ENCODE measurements at regions of chr18 and their contacts with region 1.

Region 1: GRCh38 chr18:35592298-35592697 is 10.8 kb downstream of the GALNT1 start:
- DNase-seq: peak; percentile 52
- ATAC-seq: peak; percentile 96
- H3K4me3 Mint-ChIP-seq: no peak overlapping the region
- H3K27ac Mint-ChIP-seq: no peak overlapping the region
- H3K4me1 Mint-ChIP-seq: peaks cover 49% of the 10 kb centered on the region
- H3K27me3 Mint-ChIP-seq: no peaks in the 10 kb centered on the region
- CTCF ChIP-seq: no peak

Region 2: GRCh38 chr18:34801774-34802173 is 790.5 kb before region 1 on chr18:
- CTCF ChIA-PET with region 1: no interaction called
- POLR2A ChIA-PET with region 1: no interaction called
- intact Hi-C with region 1: no loop called
- DNase-seq: no peak
- ATAC-seq: no peak
- H3K4me3 Mint-ChIP-seq: no peak overlapping the region
- H3K27ac Mint-ChIP-seq: no peak overlapping the region
- H3K4me1 Mint-ChIP-seq: no peaks in the 10 kb centered on the region
- H3K27me3 Mint-ChIP-seq: peaks cover 3% of the 10 kb centered on the region
- CTCF ChIP-seq: no peak

Region 3: GRCh38 chr18:34834897-34835296 is 757.4 kb before region 1 on chr18:
- CTCF ChIA-PET with region 1: no interaction called
- POLR2A ChIA-PET with region 1: no interaction called
- intact Hi-C with region 1: no loop called
- DNase-seq: no peak
- ATAC-seq: no peak
- H3K4me3 Mint-ChIP-seq: no peak overlapping the region
- H3K27ac Mint-ChIP-seq: no peak overlapping the region
- H3K4me1 Mint-ChIP-seq: no peaks in the 10 kb centered on the region
- H3K27me3 Mint-ChIP-seq: peaks cover 9% of the 10 kb centered on the region
- CTCF ChIP-seq: no peak

Region 4: GRCh38 chr18:35580701-35581539 is 11.4 kb before region 1 on chr18:
- CTCF ChIA-PET with region 1: interaction called, 8 read pairs
- POLR2A ChIA-PET with region 1: interaction called, 84 read pairs
- intact Hi-C with region 1: loop called (anchors 1 kb)
- DNase-seq: peak; percentile 73
- ATAC-seq: peak; percentile 71
- H3K4me3 Mint-ChIP-seq: peak overlapping the region; percentile 79
- H3K27ac Mint-ChIP-seq: peak overlapping the region; percentile 83
- H3K4me1 Mint-ChIP-seq: peaks cover 42% of the 10 kb centered on the region
- H3K27me3 Mint-ChIP-seq: no peaks in the 10 kb centered on the region
- CTCF ChIP-seq: no peak

Region 5: GRCh38 chr18:35616664-35617423 is 24.5 kb after region 1 on chr18:
- CTCF ChIA-PET with region 1: interaction called, 6 read pairs
- POLR2A ChIA-PET with region 1: interaction called, 15 read pairs
- intact Hi-C with region 1: loop called (anchors 1 kb)
- DNase-seq: peak; percentile 24
- ATAC-seq: peak; percentile 93
- H3K4me3 Mint-ChIP-seq: no peak overlapping the region
- H3K27ac Mint-ChIP-seq: no peak overlapping the region
- H3K4me1 Mint-ChIP-seq: peaks cover 12% of the 10 kb centered on the region
- H3K27me3 Mint-ChIP-seq: no peaks in the 10 kb centered on the region
- CTCF ChIP-seq: no peak

Region 6: GRCh38 chr18:35756506-35757117 is 164.3 kb after region 1 on chr18:
- CTCF ChIA-PET with region 1: interaction called, 10 read pairs
- POLR2A ChIA-PET with region 1: no interaction called
- intact Hi-C with region 1: loop called (anchors 1 kb)
- DNase-seq: no peak
- ATAC-seq: peak; percentile 75
- H3K4me3 Mint-ChIP-seq: no peak overlapping the region
- H3K27ac Mint-ChIP-seq: no peak overlapping the region
- H3K4me1 Mint-ChIP-seq: no peaks in the 10 kb centered on the region
- H3K27me3 Mint-ChIP-seq: peaks cover 17% of the 10 kb centered on the region
- CTCF ChIP-seq: no peak

Region 7: DNA sequence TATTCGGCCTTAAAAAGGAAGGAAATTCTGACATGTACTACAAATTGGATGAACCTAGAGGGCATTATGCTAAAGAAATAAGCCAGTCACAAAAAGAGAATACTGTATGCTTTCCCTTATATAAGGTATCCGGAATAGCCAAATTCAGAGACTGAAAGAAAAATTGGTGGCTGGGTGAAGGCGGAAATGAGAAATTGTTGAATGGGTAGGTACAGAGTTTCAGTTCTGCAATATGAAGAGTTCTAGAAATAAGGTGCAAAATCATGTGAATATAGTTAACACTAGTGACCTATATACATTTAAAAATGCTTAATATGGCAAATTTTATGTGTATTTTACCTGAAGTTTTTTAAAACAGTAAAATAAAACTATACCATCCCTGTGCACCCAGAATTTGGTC is 423.3 kb after region 1 on chr18:
- CTCF ChIA-PET with region 1: interaction called, 3 read pairs
- POLR2A ChIA-PET with region 1: no interaction called
- intact Hi-C with region 1: loop called (anchors 1 kb)
- DNase-seq: no peak
- ATAC-seq: peak; percentile 75
- H3K4me3 Mint-ChIP-seq: no peak overlapping the region
- H3K27ac Mint-ChIP-seq: peak overlapping the region; percentile 12
- H3K4me1 Mint-ChIP-seq: peaks cover 26% of the 10 kb centered on the region
- H3K27me3 Mint-ChIP-seq: no peaks in the 10 kb centered on the region
- CTCF ChIP-seq: no peak

Measured in activated B cell treated with CpG ODN at 0.5 μM for 24 hours (primary cell).